Motor neuron (in vitro differentiated cells): ENCODE measurements at regions of chr4 and their contacts with region 1.

Region 1: GRCh38 chr4:13654158-13654797 is 26.8 kb upstream of the BOD1L1 start:
- ATAC-seq: peak; percentile 91 to 96 (median 95)
- H3K4me3 ChIP-seq: peak overlapping the region; percentile 41 to 51 (median 48)
- H3K27ac ChIP-seq: peak overlapping the region; percentile 75 to 78
- H3K4me1 ChIP-seq: peaks cover 0 to 8% of the 10 kb centered on the region in 2 donors

Region 2: GRCh38 chr4:13340672-13341071 is 313.6 kb before region 1 on chr4:
- in situ Hi-C with region 1: no loop called
- ATAC-seq: no peak
- H3K4me3 ChIP-seq: no peak overlapping the region
- H3K27ac ChIP-seq: no peak overlapping the region
- H3K4me1 ChIP-seq: peaks cover 0 to 7% of the 10 kb centered on the region in 2 donors

Region 3: GRCh38 chr4:13902146-13902545 is 247.9 kb after region 1 on chr4:
- in situ Hi-C with region 1: no loop called
- ATAC-seq: no peak
- H3K4me3 ChIP-seq: no peak overlapping the region
- H3K27ac ChIP-seq: no peak overlapping the region
- H3K4me1 ChIP-seq: no peaks in the 10 kb centered on the region

Region 4: DNA sequence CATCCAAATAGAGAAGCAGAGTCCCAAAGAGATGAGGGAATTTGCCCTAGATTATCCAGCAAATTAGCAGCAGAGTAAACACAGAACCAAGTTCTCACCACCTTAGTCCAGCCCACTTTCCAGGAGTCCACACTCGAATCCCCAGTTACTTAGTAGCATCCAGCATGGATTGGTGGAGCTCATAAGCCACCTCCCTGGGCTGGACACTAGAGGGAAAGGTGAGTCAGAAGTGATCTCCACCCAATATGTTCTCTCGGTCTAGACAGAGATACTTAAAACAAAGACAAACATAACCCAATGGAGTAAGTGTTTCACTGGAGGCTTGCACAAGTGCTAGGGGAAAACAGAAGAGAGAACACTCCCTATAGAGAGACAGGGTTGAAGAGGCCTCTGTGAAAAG is 1242.9 kb after region 1 on chr4:
- in situ Hi-C with region 1: no loop called
- ATAC-seq: peak in 2 of 8 experiments; percentile 86 to 96
- H3K4me3 ChIP-seq: no peak overlapping the region
- H3K27ac ChIP-seq: no peak overlapping the region
- H3K4me1 ChIP-seq: no peaks in the 10 kb centered on the region

Region 5: GRCh38 chr4:15457406-15458201 is 1803.3 kb after region 1 on chr4:
- in situ Hi-C with region 1: loop called in 1 of 9 experiments (anchors 25 kb)
- ATAC-seq: peak in 7 of 8 experiments; percentile 44 to 92 (median 67)
- H3K4me3 ChIP-seq: no peak overlapping the region
- H3K27ac ChIP-seq: no peak overlapping the region
- H3K4me1 ChIP-seq: peaks cover 0 to 3% of the 10 kb centered on the region in 2 donors